Endothelial cell of umbilical vein (primary cell): ENCODE measurements at regions of chr1 and their contacts with region 1.

Region 1: GRCh38 chr1:53485478-53486394 is 26.5 kb downstream of the DMRTB1 start:
- DNase-seq: peak; percentile 63
- H3K4me3 ChIP-seq: no peak overlapping the region
- H3K27ac ChIP-seq: no peak overlapping the region
- H3K4me1 ChIP-seq: no peaks in the 10 kb centered on the region
- H3K27me3 ChIP-seq: peaks cover 3 to 8% of the 10 kb centered on the region in 2 experiments
- CTCF ChIP-seq: peak; percentile 84 to 93
- POLR2A ChIP-seq: no peak

Region 2: DNA sequence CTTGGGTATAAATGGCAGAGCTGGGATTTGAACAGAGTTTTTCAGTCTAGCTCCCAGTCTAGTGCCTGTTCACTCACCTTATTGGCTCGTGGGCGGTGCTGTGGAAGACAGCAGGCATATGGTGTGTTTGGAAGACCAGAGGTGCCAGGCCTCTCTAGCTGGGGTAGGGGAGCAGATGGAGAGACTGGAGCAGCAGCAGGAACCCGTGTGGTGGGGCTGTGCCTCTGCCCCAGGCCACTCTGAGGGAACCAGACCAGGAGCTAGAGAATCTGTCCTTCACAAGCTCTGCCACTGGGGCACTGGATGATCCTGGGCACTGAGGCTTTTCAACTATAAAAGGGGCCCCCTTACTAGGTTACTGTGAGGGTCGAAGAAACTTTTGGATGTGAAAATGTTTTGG is 20.7 kb before region 1 on chr1:
- CTCF ChIA-PET with region 1: interaction called, 17 read pairs
- POLR2A ChIA-PET with region 1: no interaction called
- dilution Hi-C with region 1: no loop called
- intact Hi-C with region 1: no loop called
- DNase-seq: no peak
- H3K4me3 ChIP-seq: no peak overlapping the region
- H3K27ac ChIP-seq: no peak overlapping the region
- H3K4me1 ChIP-seq: no peaks in the 10 kb centered on the region
- H3K27me3 ChIP-seq: no peaks in the 10 kb centered on the region
- CTCF ChIP-seq: no peak
- POLR2A ChIP-seq: no peak

Region 3: DNA sequence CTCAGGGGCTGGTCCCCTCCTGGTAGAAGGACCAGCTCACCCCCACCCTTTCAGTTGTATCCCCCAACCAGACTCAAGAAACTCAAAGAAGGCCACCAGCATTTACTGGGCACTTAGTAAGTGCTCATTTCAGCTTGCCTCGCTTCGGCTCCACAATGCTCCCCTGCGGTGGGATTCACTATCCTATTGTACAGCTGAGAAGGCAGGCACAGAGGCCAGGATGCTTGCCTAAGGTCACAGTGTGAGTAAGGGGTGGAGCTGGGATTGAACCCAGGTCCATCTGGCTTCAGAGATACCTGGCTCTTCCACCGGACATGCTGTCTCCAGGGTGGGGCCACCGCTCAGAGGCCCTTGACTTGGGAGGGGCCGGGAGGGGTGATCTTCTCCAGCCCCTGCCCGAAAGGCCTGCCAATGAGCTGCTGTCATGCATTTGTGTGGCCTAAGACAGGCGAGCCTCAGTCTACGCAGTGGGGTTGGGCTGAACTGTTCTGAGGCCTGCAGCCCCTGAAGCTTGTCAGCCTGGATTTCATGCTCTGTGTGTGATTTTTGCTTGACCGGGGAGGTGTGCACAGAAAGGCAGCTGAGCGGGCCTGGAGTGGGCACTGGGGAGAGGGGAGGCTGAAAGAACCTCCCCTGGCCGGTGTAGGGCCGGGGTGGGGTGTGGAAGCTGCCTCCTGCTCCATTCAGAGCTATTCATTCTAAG is 21.5 kb after region 1 on chr1:
- CTCF ChIA-PET with region 1: no interaction called
- POLR2A ChIA-PET with region 1: no interaction called
- dilution Hi-C with region 1: no loop called
- intact Hi-C with region 1: no loop called
- DNase-seq: no peak
- H3K4me3 ChIP-seq: no peak overlapping the region
- H3K27ac ChIP-seq: no peak overlapping the region
- H3K4me1 ChIP-seq: no peaks in the 10 kb centered on the region
- H3K27me3 ChIP-seq: no peaks in the 10 kb centered on the region
- CTCF ChIP-seq: no peak
- POLR2A ChIP-seq: no peak

Region 4: DNA sequence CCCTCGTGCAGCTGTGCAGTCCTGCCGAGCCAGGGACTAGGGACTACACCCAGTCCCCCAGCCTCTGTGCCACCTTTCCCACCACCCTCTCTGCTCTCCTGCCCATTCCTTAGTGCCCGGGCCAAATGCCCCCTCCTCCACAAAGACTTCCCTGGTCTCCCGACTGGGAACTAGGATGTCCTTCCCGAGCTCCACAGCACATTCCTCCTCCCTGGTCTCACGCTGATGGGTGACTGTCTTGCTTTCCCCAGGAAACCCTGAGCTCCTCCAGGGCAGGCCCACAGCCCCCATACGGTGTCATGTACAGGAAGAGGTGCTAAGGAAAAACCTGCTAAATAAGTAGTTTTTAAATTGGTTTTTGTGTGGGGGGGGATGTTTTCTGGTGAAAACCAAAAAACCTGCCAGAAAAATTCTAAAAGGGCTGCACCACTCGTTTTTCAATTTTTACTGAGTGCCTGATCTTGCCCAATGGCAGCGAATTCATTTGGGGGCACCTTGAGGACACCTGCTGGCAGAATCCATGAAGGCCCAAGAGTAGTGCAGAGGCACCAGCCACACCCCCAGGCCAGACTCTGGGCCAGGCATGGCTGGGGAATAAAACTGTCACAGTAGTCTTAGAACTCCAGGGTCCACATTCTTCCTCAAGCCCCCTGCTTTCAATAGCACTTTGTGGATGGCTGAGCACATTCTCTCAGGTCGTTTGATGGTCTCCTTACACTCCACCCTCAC is 202.8 kb after region 1 on chr1:
- CTCF ChIA-PET with region 1: no interaction called
- POLR2A ChIA-PET with region 1: no interaction called
- dilution Hi-C with region 1: no loop called
- intact Hi-C with region 1: loop called (anchors 2 kb)
- DNase-seq: no peak
- H3K4me3 ChIP-seq: no peak overlapping the region
- H3K27ac ChIP-seq: no peak overlapping the region
- H3K4me1 ChIP-seq: no peaks in the 10 kb centered on the region
- H3K27me3 ChIP-seq: peaks cover 23 to 32% of the 10 kb centered on the region in 2 experiments
- CTCF ChIP-seq: no peak
- POLR2A ChIP-seq: no peak

Region 5: DNA sequence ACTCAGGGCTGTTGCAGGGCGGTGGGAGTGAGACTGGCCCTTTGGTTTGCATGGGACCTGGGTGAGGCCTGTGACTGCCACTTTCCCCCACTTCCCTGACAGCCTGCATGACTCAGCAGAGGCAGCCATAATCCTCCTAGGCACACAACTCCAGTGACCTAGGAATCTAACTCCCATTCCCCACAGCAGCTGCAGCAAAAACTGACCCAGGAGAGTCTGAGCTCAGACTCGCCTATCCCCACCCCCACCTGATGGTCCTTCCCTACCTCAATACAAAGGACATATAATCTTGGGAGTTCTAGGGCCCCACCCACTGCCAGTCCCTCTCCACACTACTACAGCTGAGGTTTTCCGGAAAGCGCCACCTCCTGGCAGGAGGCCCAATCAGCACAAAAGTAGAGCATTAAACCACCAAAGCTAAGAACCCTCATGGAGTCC is 325.7 kb after region 1 on chr1:
- CTCF ChIA-PET with region 1: no interaction called
- POLR2A ChIA-PET with region 1: no interaction called
- dilution Hi-C with region 1: no loop called
- intact Hi-C with region 1: loop called (anchors 5 kb)
- DNase-seq: peak; percentile 6
- H3K4me3 ChIP-seq: no peak overlapping the region
- H3K27ac ChIP-seq: no peak overlapping the region
- H3K4me1 ChIP-seq: no peaks in the 10 kb centered on the region
- H3K27me3 ChIP-seq: no peaks in the 10 kb centered on the region
- CTCF ChIP-seq: peak in 1 of 2 donors; percentile 29
- POLR2A ChIP-seq: no peak

Region 6: GRCh38 chr1:54810100-54810942 is 1324.6 kb after region 1 on chr1:
- CTCF ChIA-PET with region 1: interaction called, 3 read pairs
- POLR2A ChIA-PET with region 1: no interaction called
- dilution Hi-C with region 1: no loop called
- intact Hi-C with region 1: loop called (anchors 1 kb)
- DNase-seq: peak; percentile 54
- H3K4me3 ChIP-seq: no peak overlapping the region
- H3K27ac ChIP-seq: no peak overlapping the region
- H3K4me1 ChIP-seq: no peaks in the 10 kb centered on the region
- H3K27me3 ChIP-seq: no peaks in the 10 kb centered on the region
- CTCF ChIP-seq: peak; percentile 76 to 89
- POLR2A ChIP-seq: no peak